CD4-positive, alpha-beta memory T cell (primary cell): ENCODE measurements at regions of chr17 and their contacts with region 1.

Region 1: GRCh38 chr17:7572588-7573323 is 6.7 kb upstream of the CD68 start:
- DNase-seq: peak; percentile 100
- H3K4me3 ChIP-seq: peak overlapping the region; percentile 57 to 93
- H3K4me3 Mint-ChIP-seq: peak overlapping the region; percentile 94 to 100 (median 98)
- H3K27ac ChIP-seq: peak overlapping the region; percentile 97
- H3K27ac Mint-ChIP-seq: peak overlapping the region; percentile 98 to 100 (median 99)
- H3K4me1 ChIP-seq: peaks cover 44% of the 10 kb centered on the region
- H3K4me1 Mint-ChIP-seq: peaks cover 25 to 62% (median 41%) of the 10 kb centered on the region in 4 donors
- H3K27me3 ChIP-seq: no peaks in the 10 kb centered on the region
- H3K27me3 Mint-ChIP-seq: no peaks in the 10 kb centered on the region

Region 2: GRCh38 chr17:7045909-7046724 is 526.6 kb before region 1 on chr17:
- CTCF ChIA-PET with region 1: no interaction called
- POLR2A ChIA-PET with region 1: no interaction called
- intact Hi-C with region 1: loop called (anchors 5 kb)
- DNase-seq: peak; percentile 60 to 79 (median 74)
- H3K4me3 ChIP-seq: peak overlapping the region; percentile 67 to 84
- H3K4me3 Mint-ChIP-seq: peak overlapping the region; percentile 83 to 94 (median 90)
- H3K27ac ChIP-seq: peak overlapping the region; percentile 76
- H3K27ac Mint-ChIP-seq: peak overlapping the region; percentile 88 to 98 (median 95)
- H3K4me1 ChIP-seq: peaks cover 47% of the 10 kb centered on the region
- H3K4me1 Mint-ChIP-seq: peaks cover 15 to 54% (median 27%) of the 10 kb centered on the region in 4 donors
- H3K27me3 ChIP-seq: no peaks in the 10 kb centered on the region
- H3K27me3 Mint-ChIP-seq: peaks cover 2% of the 10 kb centered on the region in 2 donors

Region 3: DNA sequence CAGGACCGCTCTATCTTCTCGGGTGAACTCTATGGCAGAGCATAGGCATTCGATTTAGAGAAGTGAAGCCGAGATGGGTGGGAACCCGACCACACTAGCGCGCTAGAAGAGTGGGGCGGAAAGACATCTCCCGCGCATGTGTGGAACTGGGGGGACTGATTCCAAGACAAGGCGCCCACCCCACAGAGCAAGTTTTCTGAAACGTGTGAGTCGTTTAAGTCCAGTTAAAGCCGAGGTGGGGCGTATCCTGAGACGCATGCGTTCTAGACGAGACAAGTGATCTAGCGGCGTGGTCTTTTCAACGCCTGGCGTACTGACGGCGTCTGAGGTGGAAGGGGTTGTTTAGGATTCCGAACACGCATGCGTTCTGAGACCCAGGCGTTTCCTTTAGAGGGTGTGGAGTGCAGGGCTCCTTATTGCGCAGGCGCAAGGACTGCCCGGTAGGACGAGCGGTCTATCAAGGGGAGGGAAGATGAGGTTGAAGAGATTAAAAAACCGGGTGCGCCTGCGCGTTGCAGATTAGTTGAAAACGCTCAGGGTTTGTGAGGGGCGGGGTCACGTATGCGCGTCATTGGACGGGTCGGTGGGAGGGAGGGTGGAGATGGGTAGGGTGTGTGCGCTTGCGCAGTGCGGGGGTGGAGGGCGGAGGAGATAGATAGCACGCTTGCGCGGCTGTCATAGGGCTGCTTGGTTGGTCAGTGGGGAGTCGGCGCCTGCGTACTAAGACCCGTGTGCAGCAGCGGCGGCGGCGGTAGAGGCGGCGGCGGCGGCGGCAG is 265.7 kb before region 1 on chr17 and contains the start of gene EIF5A:
- CTCF ChIA-PET with region 1: no interaction called
- POLR2A ChIA-PET with region 1: interaction called, 5 read pairs
- intact Hi-C with region 1: loop called (anchors 2 kb)
- DNase-seq: peak; percentile 99 to 100 (median 100)
- H3K4me3 ChIP-seq: peak within 1 kb of the TSS; percentile 81 to 85
- H3K4me3 Mint-ChIP-seq: peak within 1 kb of the TSS; percentile 93 to 97 (median 95)
- H3K27ac ChIP-seq: peak within 1 kb of the TSS; percentile 100
- H3K27ac Mint-ChIP-seq: peak within 1 kb of the TSS; percentile 99 to 100 (median 99)
- H3K4me1 ChIP-seq: peaks cover 35% of the 10 kb centered on the region
- H3K4me1 Mint-ChIP-seq: peaks cover 29 to 47% (median 36%) of the 10 kb centered on the region in 4 donors
- H3K27me3 ChIP-seq: no peaks in the 10 kb centered on the region
- H3K27me3 Mint-ChIP-seq: peaks cover 0 to 4% of the 10 kb centered on the region in 2 donors
- total RNA-seq, gene EIF5A: 240 to 244 TPM

Region 4: DNA sequence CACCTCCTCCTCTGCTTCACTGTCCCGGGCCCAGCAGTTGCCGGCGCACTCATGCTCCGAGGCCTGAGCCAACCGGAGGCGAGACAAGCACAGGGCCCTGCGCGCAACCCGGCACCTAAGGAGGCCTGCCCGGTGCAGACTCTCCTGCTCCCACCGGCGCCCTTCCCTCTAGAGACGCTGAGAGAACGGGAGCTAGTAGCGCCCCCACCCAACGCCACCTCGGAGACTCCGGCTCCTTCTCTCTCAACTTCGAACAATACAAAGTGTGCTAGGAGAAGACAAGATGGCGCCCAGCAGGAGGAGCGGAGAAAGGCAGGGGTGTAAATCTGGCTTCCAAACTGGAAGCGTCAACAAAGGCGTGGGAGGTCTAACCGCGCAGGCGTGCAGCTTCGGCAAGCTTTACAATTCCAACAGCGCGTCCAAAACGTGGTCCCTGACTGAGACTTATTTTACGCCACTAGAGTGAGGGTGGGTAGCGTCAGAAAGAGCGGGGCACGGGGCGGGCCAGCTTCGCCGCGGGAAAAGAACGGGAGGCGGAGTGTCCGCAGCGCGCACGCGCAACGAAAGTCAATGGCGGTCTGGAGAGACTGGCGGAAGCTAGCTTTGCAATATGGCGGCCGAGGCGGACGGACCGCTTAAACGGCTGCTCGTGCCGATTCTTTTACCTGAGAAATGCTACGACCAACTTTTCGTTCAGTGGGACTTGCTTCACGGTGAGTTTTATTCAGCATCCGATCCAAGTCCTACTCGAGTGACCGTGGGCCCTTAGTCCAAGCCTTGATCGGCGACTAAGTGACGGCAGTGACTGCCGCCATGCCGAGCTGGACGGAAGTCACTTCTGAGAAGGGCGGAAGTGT is 10.7 kb after region 1 on chr17 and contains the start of gene MPDU1:
- CTCF ChIA-PET with region 1: interaction called, 12 read pairs
- POLR2A ChIA-PET with region 1: interaction called, 220 read pairs
- intact Hi-C with region 1: loop called (anchors 1 kb)
- DNase-seq: peak; percentile 95 to 97 (median 97)
- H3K4me3 ChIP-seq: peak within 1 kb of the TSS; percentile 91 to 92
- H3K4me3 Mint-ChIP-seq: peak within 1 kb of the TSS; percentile 99 to 100 (median 100)
- H3K27ac ChIP-seq: peak within 1 kb of the TSS; percentile 97
- H3K27ac Mint-ChIP-seq: peak within 1 kb of the TSS; percentile 99 to 100 (median 100)
- H3K4me1 ChIP-seq: peaks cover 50% of the 10 kb centered on the region
- H3K4me1 Mint-ChIP-seq: peaks cover 20 to 65% (median 43%) of the 10 kb centered on the region in 4 donors
- H3K27me3 ChIP-seq: no peaks in the 10 kb centered on the region
- H3K27me3 Mint-ChIP-seq: no peaks in the 10 kb centered on the region
- total RNA-seq, gene MPDU1: 23.8 to 25.0 TPM

Region 5: DNA sequence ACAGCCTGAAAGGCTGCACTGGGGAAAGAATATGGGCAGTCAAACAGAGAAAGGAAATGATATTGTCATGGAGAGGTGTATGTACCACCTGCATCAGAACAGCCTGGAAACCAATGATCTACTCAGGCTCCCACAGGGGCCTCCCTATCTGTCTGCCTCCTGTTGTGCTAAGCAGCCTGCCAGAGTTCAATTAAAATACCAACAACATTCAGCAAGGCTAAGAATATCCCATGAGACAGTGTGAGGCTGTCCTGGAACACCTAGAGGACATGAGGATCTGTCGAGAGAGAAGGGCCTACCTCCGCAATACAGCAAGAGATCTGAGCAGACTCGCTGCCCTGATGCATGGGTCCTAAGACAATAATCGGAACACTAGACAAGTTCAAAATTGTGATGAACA is 33.5 kb after region 1 on chr17:
- CTCF ChIA-PET with region 1: no interaction called
- POLR2A ChIA-PET with region 1: no interaction called
- intact Hi-C with region 1: no loop called
- DNase-seq: no peak
- H3K4me3 ChIP-seq: no peak overlapping the region
- H3K4me3 Mint-ChIP-seq: peak overlapping the region in 1 of 8 donors; percentile 17
- H3K27ac ChIP-seq: no peak overlapping the region
- H3K27ac Mint-ChIP-seq: peak overlapping the region in 1 of 7 donors; percentile 38
- H3K4me1 ChIP-seq: peaks cover 13% of the 10 kb centered on the region
- H3K4me1 Mint-ChIP-seq: peaks cover 9 to 28% (median 17%) of the 10 kb centered on the region in 4 donors
- H3K27me3 ChIP-seq: no peaks in the 10 kb centered on the region
- H3K27me3 Mint-ChIP-seq: no peaks in the 10 kb centered on the region

Region 6: GRCh38 chr17:7627250-7628121 is 54.7 kb after region 1 on chr17 and contains the start of gene SAT2:
- CTCF ChIA-PET with region 1: no interaction called
- POLR2A ChIA-PET with region 1: interaction called, 18 read pairs
- intact Hi-C with region 1: no loop called
- DNase-seq: peak; percentile 73 to 88 (median 75)
- H3K4me3 ChIP-seq: peak within 1 kb of the TSS; percentile 76 to 82
- H3K4me3 Mint-ChIP-seq: peak within 1 kb of the TSS; percentile 91 to 95 (median 93)
- H3K27ac ChIP-seq: peak within 1 kb of the TSS; percentile 82
- H3K27ac Mint-ChIP-seq: peak within 1 kb of the TSS; percentile 75 to 96 (median 91)
- H3K4me1 ChIP-seq: peaks cover 13% of the 10 kb centered on the region
- H3K4me1 Mint-ChIP-seq: peaks cover 4 to 20% (median 14%) of the 10 kb centered on the region in 4 donors
- H3K27me3 ChIP-seq: no peaks in the 10 kb centered on the region
- H3K27me3 Mint-ChIP-seq: no peaks in the 10 kb centered on the region
- total RNA-seq, gene SAT2: 65.8 to 76.9 TPM

Region 7: GRCh38 chr17:7716901-7717755 is 144.4 kb after region 1 on chr17 and contains the start of gene DNAH2:
- CTCF ChIA-PET with region 1: no interaction called
- POLR2A ChIA-PET with region 1: no interaction called
- intact Hi-C with region 1: no loop called
- DNase-seq: no peak
- H3K4me3 ChIP-seq: peak within 1 kb of the TSS in 1 of 2 donors; percentile 41
- H3K4me3 Mint-ChIP-seq: peak within 1 kb of the TSS; percentile 55 to 86 (median 68)
- H3K27ac ChIP-seq: no peak within 1 kb of the TSS
- H3K27ac Mint-ChIP-seq: no peak within 1 kb of the TSS
- H3K4me1 ChIP-seq: peaks cover 21% of the 10 kb centered on the region
- H3K4me1 Mint-ChIP-seq: peaks cover 5 to 26% (median 20%) of the 10 kb centered on the region in 4 donors
- H3K27me3 ChIP-seq: peaks cover 28% of the 10 kb centered on the region
- H3K27me3 Mint-ChIP-seq: peaks cover 56 to 73% of the 10 kb centered on the region in 2 donors
- total RNA-seq, gene DNAH2: not detected

Region 8: GRCh38 chr17:7856883-7857723 is 284.3 kb after region 1 on chr17 and contains the start of gene NAA38:
- CTCF ChIA-PET with region 1: no interaction called
- POLR2A ChIA-PET with region 1: no interaction called
- intact Hi-C with region 1: loop called (anchors 5 kb)
- DNase-seq: peak; percentile 97 to 99 (median 98)
- H3K4me3 ChIP-seq: peak within 1 kb of the TSS; percentile 67 to 96
- H3K4me3 Mint-ChIP-seq: no peak within 1 kb of the TSS
- H3K27ac ChIP-seq: peak within 1 kb of the TSS; percentile 81
- H3K27ac Mint-ChIP-seq: no peak within 1 kb of the TSS
- H3K4me1 ChIP-seq: peaks cover 32% of the 10 kb centered on the region
- H3K4me1 Mint-ChIP-seq: peaks cover under 1 to 11% (median 7%) of the 10 kb centered on the region in 4 donors
- H3K27me3 ChIP-seq: no peaks in the 10 kb centered on the region
- H3K27me3 Mint-ChIP-seq: no peaks in the 10 kb centered on the region
- total RNA-seq, gene NAA38: 23.1 to 25.8 TPM